ENCODE measurements at regions of chr17 and their contacts with region 1.

Region 1: DNA sequence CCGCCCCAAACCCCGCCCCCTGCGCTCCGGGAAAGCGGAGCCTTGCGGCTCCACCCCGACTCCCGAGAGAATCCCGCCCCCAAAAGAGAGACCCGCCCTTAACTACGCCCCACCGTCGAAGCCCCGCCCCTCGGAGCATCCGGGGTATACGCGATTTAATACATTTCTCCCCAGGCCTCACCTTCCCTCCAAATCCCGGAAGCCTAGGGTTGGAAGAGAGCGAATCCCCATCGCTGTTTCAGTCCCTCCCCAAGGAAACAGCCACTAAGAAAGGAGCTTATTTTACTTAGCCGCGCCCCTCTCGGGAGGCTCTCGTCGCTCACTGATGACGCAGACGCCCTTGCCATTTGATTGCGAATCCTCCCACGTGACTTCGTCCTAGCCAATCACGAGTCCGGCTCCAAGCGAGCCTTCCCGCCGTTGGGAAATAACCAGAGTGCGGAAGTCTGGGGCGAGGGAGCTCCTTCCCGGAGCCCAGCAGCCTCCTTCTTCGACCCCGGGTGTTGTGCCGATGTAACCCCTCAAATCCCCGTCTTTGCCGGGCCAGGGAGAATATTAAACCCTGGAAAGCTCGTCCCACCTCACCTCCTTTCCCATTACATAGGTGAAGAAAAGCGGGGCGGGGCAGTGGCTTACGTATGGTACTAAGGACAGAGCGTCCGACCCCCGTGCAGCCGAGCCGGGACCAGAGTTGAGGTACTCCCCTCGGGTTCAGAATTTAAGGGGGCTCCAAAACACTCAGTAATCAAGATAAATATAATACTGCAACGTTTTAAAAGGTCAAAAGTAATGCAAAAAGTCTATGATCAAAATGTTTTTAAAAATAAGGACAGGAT is 462 bp upstream of the FDXR start:
- DNase-seq: peak; percentile 91 to 100 (median 98)
- ATAC-seq: peak; percentile 97
- H3K4me3 ChIP-seq: peak overlapping the region; percentile 87
- H3K4me3 Mint-ChIP-seq: peak overlapping the region; percentile 74 to 96 (median 88)
- H3K27ac ChIP-seq: peak overlapping the region; percentile 91
- H3K27ac Mint-ChIP-seq: peak overlapping the region; percentile 94 to 99 (median 97)
- H3K4me1 ChIP-seq: peaks cover 11 to 14% of the 10 kb centered on the region in 2 donors
- H3K4me1 Mint-ChIP-seq: peaks cover 18 to 41% (median 22%) of the 10 kb centered on the region in 7 donors
- H3K27me3 ChIP-seq: no peaks in the 10 kb centered on the region
- H3K27me3 Mint-ChIP-seq: peaks cover 0 to 3% (median 0%) of the 10 kb centered on the region in 5 donors

Region 2: GRCh38 chr17:74736513-74737298 is 136.6 kb before region 1 on chr17 and contains the start of gene RAB37:
- CTCF ChIA-PET with region 1: interaction called, 3 read pairs
- POLR2A ChIA-PET with region 1: interaction called, 5 read pairs
- intact Hi-C with region 1: loop called in 1 of 2 experiments (anchors 2 kb)
- DNase-seq: peak in 7 of 9 donors; percentile 35 to 59 (median 46)
- ATAC-seq: peak; percentile 66
- H3K4me3 ChIP-seq: peak within 1 kb of the TSS; percentile 95
- H3K4me3 Mint-ChIP-seq: peak within 1 kb of the TSS; percentile 85 to 97 (median 92)
- H3K27ac ChIP-seq: peak within 1 kb of the TSS; percentile 71
- H3K27ac Mint-ChIP-seq: peak within 1 kb of the TSS; percentile 79 to 99 (median 93)
- H3K4me1 ChIP-seq: peaks cover 39 to 40% of the 10 kb centered on the region in 2 donors
- H3K4me1 Mint-ChIP-seq: peaks cover 43 to 55% (median 52%) of the 10 kb centered on the region in 7 donors
- H3K27me3 ChIP-seq: no peaks in the 10 kb centered on the region
- H3K27me3 Mint-ChIP-seq: peaks cover 0 to 17% (median 0%) of the 10 kb centered on the region in 5 donors
- total RNA-seq, gene RAB37: 23.6 to 58.5 (median 34.4) TPM

Region 3: GRCh38 chr17:74852237-74853047 is 20.8 kb before region 1 on chr17:
- CTCF ChIA-PET with region 1: interaction called, 3 read pairs
- POLR2A ChIA-PET with region 1: interaction called, 3 read pairs
- intact Hi-C with region 1: loop called (anchors 1 to 2 kb)
- DNase-seq: peak in 8 of 9 donors; percentile 52 to 80 (median 73)
- ATAC-seq: peak; percentile 88
- H3K4me3 ChIP-seq: peak overlapping the region; percentile 45
- H3K4me3 Mint-ChIP-seq: peak overlapping the region; percentile 72 to 90 (median 78)
- H3K27ac ChIP-seq: no peak overlapping the region
- H3K27ac Mint-ChIP-seq: peak overlapping the region in 4 of 9 donors; percentile 25 to 64 (median 46)
- H3K4me1 ChIP-seq: peaks cover 0 to 10% of the 10 kb centered on the region in 2 donors
- H3K4me1 Mint-ChIP-seq: peaks cover 5 to 13% (median 11%) of the 10 kb centered on the region in 7 donors
- H3K27me3 ChIP-seq: no peaks in the 10 kb centered on the region
- H3K27me3 Mint-ChIP-seq: peaks cover 26 to 60% (median 41%) of the 10 kb centered on the region in 5 donors

Region 4: GRCh38 chr17:74945543-74945942 is 72.3 kb after region 1 on chr17:
- CTCF ChIA-PET with region 1: no interaction called
- POLR2A ChIA-PET with region 1: no interaction called
- intact Hi-C with region 1: no loop called
- DNase-seq: no peak
- ATAC-seq: no peak
- H3K4me3 ChIP-seq: no peak overlapping the region
- H3K4me3 Mint-ChIP-seq: no peak overlapping the region
- H3K27ac ChIP-seq: no peak overlapping the region
- H3K27ac Mint-ChIP-seq: no peak overlapping the region
- H3K4me1 ChIP-seq: no peaks in the 10 kb centered on the region
- H3K4me1 Mint-ChIP-seq: no peaks in the 10 kb centered on the region
- H3K27me3 ChIP-seq: no peaks in the 10 kb centered on the region
- H3K27me3 Mint-ChIP-seq: peaks cover 4 to 20% (median 10%) of the 10 kb centered on the region in 5 donors

Region 5: GRCh38 chr17:75034236-75034908 is 161.1 kb after region 1 on chr17:
- CTCF ChIA-PET with region 1: no interaction called
- POLR2A ChIA-PET with region 1: no interaction called
- intact Hi-C with region 1: loop called in 1 of 2 experiments (anchors 1 kb)
- DNase-seq: peak; percentile 63 to 95 (median 77)
- ATAC-seq: peak; percentile 37
- H3K4me3 ChIP-seq: peak overlapping the region; percentile 72
- H3K4me3 Mint-ChIP-seq: peak overlapping the region; percentile 85 to 97 (median 94)
- H3K27ac ChIP-seq: peak overlapping the region; percentile 77
- H3K27ac Mint-ChIP-seq: peak overlapping the region; percentile 95 to 100 (median 99)
- H3K4me1 ChIP-seq: peaks cover 36 to 40% of the 10 kb centered on the region in 2 donors
- H3K4me1 Mint-ChIP-seq: peaks cover 26 to 73% (median 58%) of the 10 kb centered on the region in 7 donors
- H3K27me3 ChIP-seq: no peaks in the 10 kb centered on the region
- H3K27me3 Mint-ChIP-seq: peaks cover 0 to 10% (median 0%) of the 10 kb centered on the region in 5 donors

Region 6: DNA sequence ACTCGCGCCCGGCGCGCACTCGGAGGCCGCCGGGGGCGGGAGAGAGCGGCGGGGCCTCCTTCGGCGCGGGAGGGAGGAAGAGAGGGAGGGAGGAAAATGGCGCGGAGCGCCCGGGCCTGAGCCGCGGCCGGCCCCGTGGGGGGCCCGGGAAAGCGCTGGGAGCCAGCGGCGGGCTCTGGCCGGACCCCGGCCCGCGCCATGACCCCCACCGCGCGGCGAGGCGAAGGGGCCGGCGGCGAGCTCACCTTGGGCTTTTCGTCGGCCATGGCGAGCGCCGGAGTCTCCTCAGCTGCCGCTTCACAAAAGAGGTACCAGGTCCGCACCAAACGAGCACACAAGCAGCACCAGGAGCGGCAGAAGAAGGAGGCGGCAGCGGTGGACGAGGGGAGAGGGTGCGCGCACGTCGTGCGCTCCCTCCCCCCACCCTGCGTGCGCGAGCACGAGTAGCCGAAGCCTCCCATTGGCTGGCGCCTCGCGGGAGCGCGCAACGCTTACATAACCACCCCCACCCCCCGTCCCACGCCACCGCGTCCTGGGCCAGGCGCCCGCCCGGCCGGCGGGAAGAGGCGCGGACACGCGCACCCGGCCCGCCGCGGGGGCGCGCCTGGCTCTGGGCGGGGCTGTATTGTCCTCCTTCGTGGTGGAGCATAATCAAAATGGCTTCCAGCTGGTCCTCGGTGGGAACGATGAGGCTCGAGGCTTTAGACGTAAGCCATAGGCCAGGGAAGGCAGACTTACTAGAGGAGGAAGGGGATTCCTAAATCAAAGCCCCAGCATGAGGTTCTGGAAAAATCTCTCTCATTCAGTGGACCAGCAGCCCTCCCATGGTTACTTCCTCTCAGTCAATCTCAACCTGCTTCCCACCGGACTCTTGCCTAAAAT is 309.6 kb after region 1 on chr17 and contains the start of gene SUMO2:
- CTCF ChIA-PET with region 1: no interaction called
- POLR2A ChIA-PET with region 1: no interaction called
- intact Hi-C with region 1: loop called (anchors 1 kb)
- DNase-seq: peak; percentile 90 to 97 (median 94)
- ATAC-seq: peak; percentile 92
- H3K4me3 ChIP-seq: peak within 1 kb of the TSS; percentile 56
- H3K4me3 Mint-ChIP-seq: peak within 1 kb of the TSS; percentile 87 to 100 (median 92)
- H3K27ac ChIP-seq: peak within 1 kb of the TSS; percentile 94
- H3K27ac Mint-ChIP-seq: peak within 1 kb of the TSS; percentile 92 to 99 (median 97)
- H3K4me1 ChIP-seq: peaks cover 22 to 26% of the 10 kb centered on the region in 2 donors
- H3K4me1 Mint-ChIP-seq: peaks cover 20 to 55% (median 38%) of the 10 kb centered on the region in 7 donors
- H3K27me3 ChIP-seq: no peaks in the 10 kb centered on the region
- H3K27me3 Mint-ChIP-seq: no peaks in the 10 kb centered on the region
- total RNA-seq, gene SUMO2: 201 to 494 (median 247) TPM

Region 7: DNA sequence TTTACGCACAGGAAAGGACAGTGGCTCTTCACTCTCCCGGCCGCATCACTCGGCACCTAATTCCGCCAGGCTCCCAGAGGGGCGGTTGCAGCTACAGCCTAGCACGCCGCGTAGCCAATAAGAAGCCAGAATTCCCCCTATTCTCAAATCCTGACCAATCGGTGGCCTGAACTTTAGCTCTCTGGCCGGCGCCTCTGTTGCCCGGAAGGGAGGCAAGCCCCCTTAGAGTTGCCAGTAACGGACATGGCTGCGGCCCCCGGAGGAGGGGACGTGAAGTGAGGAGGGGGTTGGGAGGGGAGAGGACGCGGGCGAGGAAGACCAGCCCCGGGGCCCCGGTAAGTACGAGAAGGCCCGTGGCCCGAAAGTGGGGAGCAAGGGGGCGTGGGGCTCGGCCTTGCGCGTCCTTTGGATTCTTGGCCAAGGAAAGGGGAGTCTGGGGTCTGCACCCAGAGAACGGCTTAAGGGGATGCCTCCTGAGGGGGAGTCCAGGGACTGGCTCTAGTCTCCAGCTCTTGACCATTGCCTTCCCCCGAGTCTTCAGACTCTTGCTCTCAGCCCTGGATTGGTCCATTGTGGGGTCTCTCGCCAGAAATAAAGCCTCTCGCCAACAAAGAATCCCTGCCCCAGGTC is 583.3 kb after region 1 on chr17 and contains the start of gene TMEM94:
- CTCF ChIA-PET with region 1: no interaction called
- POLR2A ChIA-PET with region 1: no interaction called
- intact Hi-C with region 1: loop called in 1 of 2 experiments (anchors 1 kb)
- DNase-seq: peak; percentile 70 to 93 (median 89)
- ATAC-seq: peak; percentile 98
- H3K4me3 ChIP-seq: peak within 1 kb of the TSS; percentile 99
- H3K4me3 Mint-ChIP-seq: peak within 1 kb of the TSS; percentile 92 to 99 (median 94)
- H3K27ac ChIP-seq: peak within 1 kb of the TSS; percentile 74
- H3K27ac Mint-ChIP-seq: peak within 1 kb of the TSS; percentile 84 to 99 (median 93)
- H3K4me1 ChIP-seq: peaks cover 10% of the 10 kb centered on the region in 2 donors
- H3K4me1 Mint-ChIP-seq: peaks cover 25 to 42% (median 34%) of the 10 kb centered on the region in 7 donors
- H3K27me3 ChIP-seq: no peaks in the 10 kb centered on the region
- H3K27me3 Mint-ChIP-seq: no peaks in the 10 kb centered on the region
- total RNA-seq, gene TMEM94: 74.1 to 97.2 (median 81.9) TPM

Region 8: DNA sequence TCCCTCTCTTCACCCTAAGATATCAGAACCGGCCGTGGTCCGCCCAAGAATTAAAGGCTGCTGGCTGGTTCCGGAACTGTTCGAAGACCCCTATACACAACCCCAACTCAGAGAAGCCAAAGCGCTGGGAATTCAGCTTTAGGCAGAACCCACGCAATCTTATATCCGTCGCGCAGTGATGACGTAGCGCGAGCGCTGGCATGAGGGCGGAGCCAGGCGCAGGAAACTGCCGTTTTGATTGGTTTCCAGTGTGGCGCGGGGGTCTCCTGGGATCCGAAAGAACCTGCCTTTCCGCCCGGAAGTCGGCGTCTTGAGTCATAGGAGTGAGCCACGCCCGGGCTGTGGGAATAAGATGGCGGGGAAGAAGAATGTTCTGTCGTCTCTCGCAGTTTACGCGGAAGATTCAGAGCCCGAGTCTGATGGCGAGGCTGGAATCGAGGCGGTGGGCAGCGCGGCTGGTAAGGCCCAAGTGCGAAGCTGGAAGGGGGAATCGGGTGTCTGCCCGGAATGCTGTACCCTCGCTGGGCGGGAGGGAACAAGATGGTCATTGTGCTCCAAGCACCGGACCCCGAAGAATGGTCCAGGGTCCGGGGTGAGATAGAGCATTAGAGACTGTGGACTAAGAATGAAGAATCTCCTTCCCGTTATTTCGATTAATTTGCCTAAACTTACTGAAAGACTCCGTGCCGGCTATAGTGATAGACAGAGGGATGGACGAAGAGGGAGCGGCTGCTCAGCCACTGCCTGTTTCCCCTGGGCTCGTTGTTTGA is 794.0 kb after region 1 on chr17 and contains the starts of genes RECQL5 and SAP30BP:
- CTCF ChIA-PET with region 1: no interaction called
- POLR2A ChIA-PET with region 1: no interaction called
- intact Hi-C with region 1: loop called in 1 of 2 experiments (anchors 5 kb)
- DNase-seq: peak; percentile 94 to 98 (median 96)
- ATAC-seq: peak; percentile 100
- H3K4me3 ChIP-seq: peak within 1 kb of the TSS; percentile 99
- H3K4me3 Mint-ChIP-seq: peak within 1 kb of the TSS in 6 of 10 donors; percentile 59 to 74 (median 64)
- H3K27ac ChIP-seq: peak within 1 kb of the TSS; percentile 96
- H3K27ac Mint-ChIP-seq: peak within 1 kb of the TSS in 5 of 9 donors; percentile 6 to 83 (median 60)
- H3K4me1 ChIP-seq: peaks cover 21 to 26% of the 10 kb centered on the region in 2 donors
- H3K4me1 Mint-ChIP-seq: peaks cover 11 to 34% (median 21%) of the 10 kb centered on the region in 7 donors
- H3K27me3 ChIP-seq: no peaks in the 10 kb centered on the region
- H3K27me3 Mint-ChIP-seq: no peaks in the 10 kb centered on the region
- total RNA-seq, gene RECQL5: 38.7 to 76.5 (median 49.2) TPM
- total RNA-seq, gene SAP30BP: 97.6 to 198 (median 116) TPM

Region 9: GRCh38 chr17:76014184-76014924 is 1141.1 kb after region 1 on chr17:
- CTCF ChIA-PET with region 1: no interaction called
- POLR2A ChIA-PET with region 1: no interaction called
- intact Hi-C with region 1: no loop called
- DNase-seq: peak; percentile 62 to 85 (median 77)
- ATAC-seq: peak; percentile 96
- H3K4me3 ChIP-seq: no peak overlapping the region
- H3K4me3 Mint-ChIP-seq: peak overlapping the region in 3 of 10 donors; percentile 40 to 68 (median 49)
- H3K27ac ChIP-seq: no peak overlapping the region
- H3K27ac Mint-ChIP-seq: peak overlapping the region in 5 of 9 donors; percentile 33 to 62 (median 40)
- H3K4me1 ChIP-seq: peaks cover 3 to 5% of the 10 kb centered on the region in 2 donors
- H3K4me1 Mint-ChIP-seq: peaks cover 0 to 11% (median 8%) of the 10 kb centered on the region in 7 donors
- H3K27me3 ChIP-seq: no peaks in the 10 kb centered on the region
- H3K27me3 Mint-ChIP-seq: no peaks in the 10 kb centered on the region